Kidney (tissue), 22 donors: ENCODE measurements at regions of chr3 and their contacts with region 1.

Region 1: GRCh38 chr3:136752422-136753325 is 496 bp upstream of the STAG1 start:
- DNase-seq: peak; percentile 99 to 100 (median 99)
- H3K4me3 ChIP-seq: peak overlapping the region; percentile 83 to 89 (median 88)
- H3K27ac ChIP-seq: peak overlapping the region; percentile 98
- H3K4me1 ChIP-seq: peaks cover 2 to 16% (median 3%) of the 10 kb centered on the region in 3 donors
- H3K27me3 ChIP-seq: no peaks in the 10 kb centered on the region
- CTCF ChIP-seq: peak; percentile 35

Region 2: DNA sequence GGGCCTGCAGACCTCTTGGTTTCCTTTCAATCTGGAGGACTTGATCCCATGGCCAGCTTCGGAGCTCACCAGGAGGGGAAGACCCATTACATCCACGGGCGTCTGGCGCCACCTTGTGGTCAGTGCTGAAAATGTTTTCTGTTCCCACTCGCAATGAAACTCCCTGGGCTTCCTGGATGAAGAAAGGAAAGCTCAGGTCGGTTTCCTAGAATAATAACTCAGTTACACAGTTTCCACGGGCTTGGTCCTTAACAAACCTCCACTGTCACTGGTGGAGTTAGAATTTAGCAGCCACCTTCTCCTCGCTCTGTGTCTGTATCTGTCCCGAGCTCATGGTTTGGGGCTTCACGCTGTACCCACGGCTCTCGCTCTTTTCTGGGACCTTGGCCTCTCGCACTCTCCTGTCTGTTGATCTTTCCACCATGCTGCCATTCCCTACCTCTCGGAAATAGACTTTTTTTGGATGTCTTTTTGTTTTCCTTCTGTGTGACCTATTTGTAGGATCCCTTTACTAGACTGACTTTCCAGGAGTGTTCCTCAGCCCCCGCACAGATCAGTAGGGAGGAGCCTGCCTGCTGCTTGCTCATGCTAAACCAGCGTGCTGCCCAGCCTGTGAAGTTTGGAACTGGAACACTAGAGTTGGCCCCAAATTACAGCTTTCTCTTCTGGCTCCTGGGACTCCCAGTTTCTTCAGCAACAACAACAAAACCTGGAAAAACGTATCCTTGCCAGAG is 261.4 kb after region 1 on chr3:
- intact Hi-C with region 1: loop called (anchors 10 kb)
- DNase-seq: peak; percentile 92 to 96 (median 93)
- H3K4me3 ChIP-seq: peak overlapping the region; percentile 72 to 88 (median 83)
- H3K27ac ChIP-seq: peak overlapping the region; percentile 45
- H3K4me1 ChIP-seq: peaks cover 0 to 4% (median 2%) of the 10 kb centered on the region in 3 donors
- H3K27me3 ChIP-seq: no peaks in the 10 kb centered on the region
- CTCF ChIP-seq: peak; percentile 95

Region 3: DNA sequence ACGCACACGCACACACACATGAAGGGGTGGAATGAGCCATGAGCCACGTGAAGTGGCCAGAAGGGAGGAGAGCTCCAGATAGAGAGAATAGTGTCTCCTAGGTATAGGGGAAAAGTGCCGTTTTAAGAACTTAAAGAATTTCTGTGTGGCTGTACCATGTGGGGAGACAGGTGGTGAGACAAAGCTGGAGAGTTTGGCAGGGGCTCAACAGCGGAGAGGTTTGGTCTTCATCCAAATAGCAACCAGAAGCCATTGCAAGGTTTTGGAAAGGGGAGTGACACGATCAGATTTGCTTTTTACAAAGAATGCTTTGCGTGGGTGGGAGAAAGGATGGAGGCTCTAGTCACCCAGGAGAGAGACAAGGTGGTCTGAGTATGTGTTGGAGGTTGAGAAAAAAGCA is 351.1 kb after region 1 on chr3:
- intact Hi-C with region 1: no loop called
- DNase-seq: no peak
- H3K4me3 ChIP-seq: no peak overlapping the region
- H3K27ac ChIP-seq: no peak overlapping the region
- H3K4me1 ChIP-seq: no peaks in the 10 kb centered on the region
- H3K27me3 ChIP-seq: no peaks in the 10 kb centered on the region
- CTCF ChIP-seq: no peak